ENCODE measurements at regions of chr15 and their contacts with region 1.

Region 1: GRCh38 chr15:51829360-51830275 is at the start of gene TMOD3:
- DNase-seq: peak; percentile 88
- H3K4me3 Mint-ChIP-seq: peak within 1 kb of the TSS; percentile 98
- H3K27ac Mint-ChIP-seq: peak within 1 kb of the TSS; percentile 97
- H3K4me1 Mint-ChIP-seq: peaks cover 47% of the 10 kb centered on the region
- H3K27me3 Mint-ChIP-seq: peaks cover 2% of the 10 kb centered on the region
- total RNA-seq, gene TMOD3: 59.2 and 60.2 TPM in 2 replicates

Region 2: DNA sequence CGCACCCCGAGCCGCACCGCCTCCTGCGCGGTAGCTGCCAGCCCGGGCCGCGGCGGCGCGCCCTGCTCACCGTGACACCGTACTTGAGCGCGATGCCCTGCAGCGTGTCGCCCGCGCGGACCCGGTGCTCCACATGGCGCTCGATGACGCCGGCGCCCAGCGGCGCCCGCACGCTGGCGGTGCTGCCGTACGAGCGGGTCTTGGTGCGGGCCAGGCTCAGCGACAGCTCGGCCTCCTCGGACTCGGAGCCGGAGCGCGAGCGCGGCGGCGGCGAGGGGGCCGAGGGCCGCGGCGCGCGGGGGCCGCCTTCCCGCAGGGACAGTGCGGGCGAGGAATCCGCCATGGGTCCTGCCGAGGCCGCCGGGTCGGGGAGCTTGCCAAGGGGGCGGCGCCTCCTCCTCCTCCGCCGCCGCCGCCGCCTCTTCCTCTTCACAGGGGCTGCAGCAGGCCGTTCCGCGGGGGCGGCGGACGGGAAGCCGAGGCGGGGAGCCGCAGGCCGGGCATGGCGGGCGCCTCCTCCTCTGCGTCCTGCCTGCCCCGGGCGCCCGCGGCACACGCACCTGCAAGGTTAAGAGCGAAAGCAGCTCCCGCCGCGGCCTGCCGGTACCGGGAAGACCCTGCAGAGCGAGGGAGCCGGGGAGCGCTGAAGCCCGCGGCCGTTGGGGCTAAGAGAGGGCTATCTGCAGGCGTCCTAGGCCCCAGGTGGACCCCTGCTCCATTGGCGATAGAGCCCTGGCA is 92.2 kb before region 1 on chr15 and contains the start of gene LYSMD2:
- intact Hi-C with region 1: loop called (anchors 2 kb)
- DNase-seq: peak; percentile 64
- H3K4me3 Mint-ChIP-seq: peak within 1 kb of the TSS; percentile 84
- H3K27ac Mint-ChIP-seq: peak within 1 kb of the TSS; percentile 85
- H3K4me1 Mint-ChIP-seq: peaks cover 44% of the 10 kb centered on the region
- H3K27me3 Mint-ChIP-seq: peaks cover 2% of the 10 kb centered on the region
- total RNA-seq, gene LYSMD2: 16.0 and 16.5 TPM in 2 replicates

Region 3: GRCh38 chr15:51776952-51777574 is 52.6 kb before region 1 on chr15:
- intact Hi-C with region 1: loop called (anchors 2 kb)
- DNase-seq: peak; percentile 53
- H3K4me3 Mint-ChIP-seq: no peak overlapping the region
- H3K27ac Mint-ChIP-seq: no peak overlapping the region
- H3K4me1 Mint-ChIP-seq: peaks cover 7% of the 10 kb centered on the region
- H3K27me3 Mint-ChIP-seq: no peaks in the 10 kb centered on the region

Region 4: DNA sequence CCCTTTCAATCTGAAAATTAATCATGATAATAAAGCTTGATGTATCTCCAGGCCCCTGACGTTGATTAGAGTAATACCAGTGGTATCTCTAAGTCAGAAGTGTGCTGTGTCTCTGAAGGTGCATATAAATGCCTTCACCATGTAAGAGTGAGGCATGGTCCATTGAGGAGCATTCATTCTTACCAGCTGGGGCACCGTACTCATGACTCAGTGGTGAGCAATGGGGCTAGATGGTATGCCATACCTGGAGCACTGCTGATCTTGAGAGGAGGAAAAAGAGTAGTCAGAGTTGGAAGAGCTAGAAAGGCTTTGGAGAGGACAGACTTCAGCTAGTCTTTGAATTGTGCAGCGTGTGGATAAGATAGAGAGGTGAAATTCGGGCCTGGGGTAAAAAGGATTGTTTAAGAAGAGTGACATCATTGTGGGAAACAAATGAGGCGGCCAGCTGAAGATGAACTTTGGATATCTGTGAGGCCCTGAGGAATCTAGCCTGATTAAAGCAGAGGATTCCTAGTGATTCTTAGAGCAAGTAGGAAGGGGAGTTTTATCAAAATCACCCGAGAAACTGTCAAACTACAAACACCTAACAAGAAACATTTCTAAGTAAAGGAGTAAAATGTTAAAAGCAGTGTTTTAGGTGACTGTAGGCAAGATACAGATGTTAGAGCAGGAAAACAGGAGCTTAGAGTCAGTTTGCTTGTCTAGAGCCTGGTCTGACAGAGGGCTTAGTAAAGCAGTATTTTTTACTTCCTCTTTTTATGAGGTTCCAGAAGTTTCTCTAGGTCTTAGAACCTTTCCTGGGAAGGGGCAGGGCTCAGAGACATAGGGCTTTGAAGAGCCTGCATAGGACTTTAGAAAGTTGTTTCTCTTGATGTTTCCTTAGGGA is 13.5 kb after region 1 on chr15:
- intact Hi-C with region 1: no loop called
- DNase-seq: no peak
- H3K4me3 Mint-ChIP-seq: no peak overlapping the region
- H3K27ac Mint-ChIP-seq: no peak overlapping the region
- H3K4me1 Mint-ChIP-seq: peaks cover 65% of the 10 kb centered on the region
- H3K27me3 Mint-ChIP-seq: no peaks in the 10 kb centered on the region

Region 5: GRCh38 chr15:51917493-51917892 is 87.9 kb after region 1 on chr15:
- intact Hi-C with region 1: no loop called
- DNase-seq: no peak
- H3K4me3 Mint-ChIP-seq: no peak overlapping the region
- H3K27ac Mint-ChIP-seq: no peak overlapping the region
- H3K4me1 Mint-ChIP-seq: no peaks in the 10 kb centered on the region
- H3K27me3 Mint-ChIP-seq: no peaks in the 10 kb centered on the region

Region 6: DNA sequence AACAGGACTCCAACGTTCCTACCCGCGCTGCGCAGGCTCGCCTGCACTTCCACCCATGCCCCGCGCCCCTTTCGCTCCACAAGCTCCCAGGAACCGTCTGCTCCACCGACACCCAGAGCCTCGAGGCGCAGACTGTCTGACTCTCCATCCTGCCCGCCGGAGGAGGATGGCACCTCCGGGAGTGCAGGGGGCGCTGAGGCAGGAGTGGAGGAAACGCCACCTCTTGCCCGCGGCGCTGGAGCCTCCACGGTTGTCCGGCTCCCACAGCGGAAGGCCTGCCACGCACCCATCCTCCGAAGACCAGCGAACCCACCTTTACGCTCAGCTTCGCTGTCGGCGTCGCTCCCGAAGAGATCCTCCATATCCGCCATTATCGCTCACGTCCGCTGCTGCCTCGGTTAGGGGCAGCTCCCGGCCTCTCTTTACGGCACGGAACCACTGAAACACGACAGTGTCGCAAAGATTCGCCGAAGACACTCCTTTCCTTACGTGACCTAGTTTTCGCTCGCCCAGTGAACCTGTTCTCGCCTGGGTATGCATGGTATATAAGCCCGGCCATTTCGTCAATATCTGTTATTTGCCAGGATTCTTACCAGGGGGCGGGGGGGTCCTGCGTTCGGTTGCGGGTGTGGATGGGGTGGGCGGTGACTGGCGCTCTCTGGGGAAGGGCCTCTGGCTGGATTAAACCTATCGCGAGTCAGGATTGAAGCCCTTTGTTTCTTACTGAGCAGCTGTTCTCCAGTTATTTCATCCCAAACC is 141.9 kb after region 1 on chr15 and contains the start of gene LEO1:
- intact Hi-C with region 1: loop called (anchors 1 kb)
- DNase-seq: peak; percentile 88
- H3K4me3 Mint-ChIP-seq: peak within 1 kb of the TSS; percentile 98
- H3K27ac Mint-ChIP-seq: peak within 1 kb of the TSS; percentile 92
- H3K4me1 Mint-ChIP-seq: peaks cover 22% of the 10 kb centered on the region
- H3K27me3 Mint-ChIP-seq: peaks cover 1% of the 10 kb centered on the region
- total RNA-seq, gene LEO1: 36.3 and 36.5 TPM in 2 replicates

Region 7: GRCh38 chr15:53312707-53313106 is 1483.1 kb after region 1 on chr15:
- intact Hi-C with region 1: no loop called
- DNase-seq: no peak
- H3K4me3 Mint-ChIP-seq: no peak overlapping the region
- H3K27ac Mint-ChIP-seq: no peak overlapping the region
- H3K4me1 Mint-ChIP-seq: no peaks in the 10 kb centered on the region
- H3K27me3 Mint-ChIP-seq: no peaks in the 10 kb centered on the region

Measured in activated T-helper 1 cell treated with anti-CD3 and anti-CD28 coated beads, Interleukin-12 subunit alpha, Interleukin-12 subunit beta, Interleukin-2, Interleukin-4 antibody, amounts not matched to agents 30 ng/mL and 10 ng/mL and 1 ng/mL, durations not matched to agents 14 hours and 24 hours and 36 hours (primary cell).